ENCODE measurements at regions of chr3 and their contacts with region 1.

Region 1: DNA sequence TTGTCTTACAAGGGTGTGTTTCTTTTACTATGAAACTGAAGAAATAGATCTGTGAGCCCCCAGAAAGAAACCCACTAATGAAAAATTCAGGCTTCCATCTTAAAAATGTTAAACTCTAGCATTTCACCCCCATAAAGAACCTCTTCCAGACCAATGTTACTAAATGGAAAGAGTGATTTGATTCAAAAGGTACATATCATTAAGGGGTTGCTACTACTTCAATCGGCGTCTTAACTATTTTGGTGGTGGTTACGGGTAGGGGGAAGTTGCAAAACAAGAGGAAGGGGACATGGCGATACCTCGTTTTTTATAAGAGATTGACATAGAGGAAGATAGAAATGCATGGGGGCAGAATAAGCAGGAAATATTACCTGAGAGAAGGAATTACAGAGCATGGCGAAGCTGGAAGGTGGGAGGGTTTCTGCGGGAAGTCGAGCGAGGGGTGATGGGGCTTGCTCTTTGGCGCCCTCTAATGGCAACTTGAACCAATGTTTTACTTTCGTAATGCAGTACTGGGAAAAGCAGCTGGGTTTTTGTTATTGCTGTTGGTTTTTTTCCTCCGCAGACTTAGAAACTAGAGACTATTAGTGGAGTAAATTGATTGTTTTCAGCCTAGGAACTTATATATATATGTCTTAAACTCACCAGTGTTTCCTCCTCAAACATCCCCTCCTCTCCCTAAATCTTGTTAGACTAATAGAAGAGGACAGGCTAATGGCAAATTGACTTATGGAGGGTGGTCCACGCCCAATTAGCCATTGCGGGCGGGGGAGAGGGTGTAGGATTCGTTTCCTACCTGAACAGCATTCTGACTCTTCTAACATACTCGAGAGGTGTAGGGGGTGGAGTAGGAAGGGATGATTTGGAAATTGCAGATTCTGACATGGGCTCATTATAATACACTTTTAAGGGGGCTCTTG is 11.3 kb upstream of the SOX2 start:
- DNase-seq: peak; percentile 89
- H3K4me3 ChIP-seq: peak overlapping the region; percentile 38 to 75 (median 43)
- H3K27ac ChIP-seq: no peak overlapping the region
- H3K4me1 ChIP-seq: peaks cover 28% of the 10 kb centered on the region
- H3K27me3 ChIP-seq: peaks cover 0 to 2% of the 10 kb centered on the region in 2 experiments
- CTCF ChIP-seq: peak; percentile 84 to 90
- POLR2A ChIP-seq: no peak

Region 2: GRCh38 chr3:180802837-180803236 is 897.6 kb before region 1 on chr3:
- CTCF ChIA-PET with region 1: interaction called, 16 read pairs
- POLR2A ChIA-PET with region 1: no interaction called
- dilution Hi-C with region 1: no loop called
- intact Hi-C with region 1: loop called (anchors 10 kb)
- DNase-seq: peak; percentile 25
- H3K4me3 ChIP-seq: no peak overlapping the region
- H3K27ac ChIP-seq: no peak overlapping the region
- H3K4me1 ChIP-seq: peaks cover 4% of the 10 kb centered on the region
- H3K27me3 ChIP-seq: no peaks in the 10 kb centered on the region
- CTCF ChIP-seq: peak; percentile 7 to 28
- POLR2A ChIP-seq: no peak

Region 3: DNA sequence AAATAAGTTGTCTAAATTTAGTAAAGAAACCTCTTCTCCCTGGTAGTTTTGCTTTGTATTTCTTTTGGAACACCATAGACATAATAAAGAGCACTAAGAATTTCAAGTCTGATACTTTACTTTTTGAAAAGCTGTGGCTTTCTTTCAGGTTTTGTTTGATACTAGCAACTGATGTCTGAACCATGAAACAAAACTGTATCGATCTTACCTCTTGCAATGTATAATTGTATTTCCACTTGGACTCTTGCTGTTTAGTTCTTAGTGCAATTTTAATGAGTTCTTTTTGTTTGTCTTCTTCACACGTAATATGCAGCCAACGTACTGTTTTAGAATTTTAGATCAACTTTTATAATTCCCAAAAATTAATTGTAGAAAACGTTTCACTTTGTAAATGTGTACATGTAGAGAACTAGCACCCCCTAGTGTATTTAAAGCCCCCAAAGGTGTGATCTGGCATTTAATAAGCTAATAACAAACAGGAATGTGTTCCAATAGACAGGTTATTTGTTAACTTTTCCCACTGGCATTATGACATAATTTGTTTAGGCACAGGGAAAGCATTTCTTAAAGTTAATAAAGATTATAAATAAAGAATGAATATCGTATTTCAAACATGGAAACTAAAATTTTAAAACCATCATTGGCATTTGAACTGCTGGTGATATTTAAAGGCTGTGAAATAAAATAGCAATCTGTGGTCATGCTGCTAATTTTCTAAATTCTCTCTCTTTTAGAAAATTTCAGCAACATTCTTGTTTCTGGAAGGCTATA is 421.8 kb before region 1 on chr3:
- CTCF ChIA-PET with region 1: interaction called, 20 read pairs
- POLR2A ChIA-PET with region 1: no interaction called
- dilution Hi-C with region 1: no loop called
- intact Hi-C with region 1: loop called (anchors 2 kb)
- DNase-seq: peak; percentile 6
- H3K4me3 ChIP-seq: no peak overlapping the region
- H3K27ac ChIP-seq: no peak overlapping the region
- H3K4me1 ChIP-seq: no peaks in the 10 kb centered on the region
- H3K27me3 ChIP-seq: peaks cover 0 to 4% of the 10 kb centered on the region in 2 experiments
- CTCF ChIP-seq: peak in 1 of 2 donors; percentile 7
- POLR2A ChIP-seq: no peak

Region 4: DNA sequence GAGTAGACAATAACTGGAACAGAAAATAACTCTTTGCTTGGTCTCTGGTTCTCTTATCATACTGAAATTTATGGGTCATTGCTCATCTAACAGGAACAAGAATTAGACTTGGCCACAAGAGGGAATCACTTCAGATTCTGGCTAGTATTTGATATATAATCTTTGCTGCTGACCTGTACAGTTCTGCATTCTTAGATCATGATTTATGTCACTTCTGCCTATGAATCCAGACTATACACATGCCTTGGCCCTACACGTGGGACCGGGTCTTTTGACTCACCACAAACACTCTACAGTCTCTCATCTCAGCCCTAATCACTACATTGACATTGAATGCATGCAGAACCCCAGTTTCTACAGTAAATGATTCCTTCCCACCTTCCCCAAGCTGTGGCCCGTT is 151.2 kb before region 1 on chr3:
- CTCF ChIA-PET with region 1: interaction called, 14 read pairs
- POLR2A ChIA-PET with region 1: interaction called, 3 read pairs
- dilution Hi-C with region 1: no loop called
- intact Hi-C with region 1: no loop called
- DNase-seq: no peak
- H3K4me3 ChIP-seq: no peak overlapping the region
- H3K27ac ChIP-seq: no peak overlapping the region
- H3K4me1 ChIP-seq: no peaks in the 10 kb centered on the region
- H3K27me3 ChIP-seq: no peaks in the 10 kb centered on the region
- CTCF ChIP-seq: no peak
- POLR2A ChIP-seq: no peak

Region 5: DNA sequence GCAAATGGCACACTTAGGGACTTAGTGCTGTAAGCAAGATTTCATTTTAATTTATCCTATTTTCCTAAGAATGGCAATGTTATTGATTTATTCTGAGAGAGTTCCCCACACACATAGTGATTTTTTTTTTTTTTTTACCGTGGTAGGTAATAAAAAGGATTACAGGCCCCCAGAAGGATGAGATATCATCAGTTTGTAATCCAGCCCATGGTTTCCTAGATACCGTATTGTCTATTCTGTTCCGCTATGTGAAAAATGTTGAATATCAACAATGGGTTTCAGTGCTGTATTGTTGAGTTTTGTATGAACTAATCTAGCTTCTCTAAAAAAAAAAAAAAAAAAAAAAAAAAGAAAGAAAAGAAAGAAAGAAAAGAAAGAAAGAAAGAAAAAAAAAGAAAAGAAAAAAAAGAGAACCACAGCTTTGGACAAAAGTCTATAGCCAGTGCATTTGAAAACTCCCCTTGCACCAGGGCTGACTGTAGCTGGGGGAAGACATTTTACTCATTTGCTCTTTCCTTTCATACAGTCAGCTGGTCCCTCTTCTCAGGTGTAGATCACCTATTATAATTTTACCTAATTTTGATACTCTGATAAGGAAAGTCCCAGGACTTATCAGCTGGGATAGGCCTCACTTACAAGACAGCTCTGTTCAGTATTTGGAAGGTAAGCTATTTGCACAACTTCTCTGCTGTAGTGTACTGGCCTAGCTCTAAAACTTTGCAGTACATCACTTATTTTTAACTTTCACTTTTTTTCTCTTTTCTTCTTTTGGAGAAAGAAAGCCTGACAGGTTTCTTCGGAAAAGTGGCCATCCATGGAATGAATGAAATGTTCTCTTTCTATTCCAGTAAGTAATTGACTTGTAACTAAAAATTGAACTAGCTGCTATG is 90.1 kb before region 1 on chr3:
- CTCF ChIA-PET with region 1: interaction called, 25 read pairs
- POLR2A ChIA-PET with region 1: no interaction called
- dilution Hi-C with region 1: no loop called
- intact Hi-C with region 1: no loop called
- DNase-seq: peak; percentile 60
- H3K4me3 ChIP-seq: no peak overlapping the region
- H3K27ac ChIP-seq: no peak overlapping the region
- H3K4me1 ChIP-seq: peaks cover 19% of the 10 kb centered on the region
- H3K27me3 ChIP-seq: no peaks in the 10 kb centered on the region
- CTCF ChIP-seq: no peak
- POLR2A ChIP-seq: no peak

Region 6: DNA sequence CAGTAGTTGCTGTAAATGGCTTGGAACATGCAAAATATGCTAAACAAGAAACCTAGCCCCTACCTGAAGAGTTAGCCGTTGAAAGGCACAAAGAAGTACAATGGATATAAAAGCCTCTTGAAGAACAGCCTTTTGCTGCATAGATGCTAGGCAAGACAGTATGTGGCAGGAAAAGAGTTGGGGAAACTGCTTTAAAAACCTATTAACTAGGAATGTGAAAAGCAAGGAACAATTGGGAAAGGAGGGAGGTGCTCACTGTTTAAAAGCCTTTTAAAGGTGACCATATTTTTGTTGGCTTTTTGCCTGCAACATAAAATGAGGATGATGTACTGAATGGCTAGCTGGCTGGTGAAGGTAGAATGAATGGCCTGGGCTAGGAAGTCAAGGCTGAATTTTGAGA is 13.2 kb before region 1 on chr3:
- CTCF ChIA-PET with region 1: interaction called, 11 read pairs
- POLR2A ChIA-PET with region 1: no interaction called
- dilution Hi-C with region 1: no loop called
- intact Hi-C with region 1: no loop called
- DNase-seq: no peak
- H3K4me3 ChIP-seq: no peak overlapping the region
- H3K27ac ChIP-seq: no peak overlapping the region
- H3K4me1 ChIP-seq: no peaks in the 10 kb centered on the region
- H3K27me3 ChIP-seq: no peaks in the 10 kb centered on the region
- CTCF ChIP-seq: no peak
- POLR2A ChIP-seq: no peak

Measured in endothelial cell of umbilical vein (primary cell).